ENCODE measurements at regions of chr2 and their contacts with region 1.

Region 1: DNA sequence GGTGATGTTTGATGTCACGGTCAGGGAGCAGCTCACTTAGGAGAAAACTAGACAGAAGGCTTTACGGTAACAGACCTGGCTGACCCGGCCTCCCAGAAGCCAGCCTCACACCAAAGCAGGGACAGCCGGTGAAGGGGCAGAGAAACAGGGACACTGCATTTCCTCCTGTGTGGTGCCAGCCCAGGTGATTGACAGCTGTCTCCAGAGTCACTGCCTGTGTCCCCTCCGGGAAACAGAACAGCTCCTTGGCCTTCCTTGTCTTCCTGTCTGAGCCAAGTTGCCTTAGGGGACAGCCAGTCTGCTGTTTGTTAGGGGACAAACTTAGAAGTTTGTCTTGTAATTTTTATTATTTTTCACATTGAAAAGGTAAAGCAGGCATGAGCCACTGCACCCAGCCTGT is 41.2 kb downstream of the PLB1 start:
- DNase-seq: no peak
- H3K4me3 ChIP-seq: no peak overlapping the region
- H3K4me3 Mint-ChIP-seq: no peak overlapping the region
- H3K27ac Mint-ChIP-seq: no peak overlapping the region
- H3K4me1 ChIP-seq: no peaks in the 10 kb centered on the region; the same call in 1 of the 2 replicates
- H3K4me1 Mint-ChIP-seq: no peaks in the 10 kb centered on the region
- H3K27me3 ChIP-seq: no peaks in the 10 kb centered on the region
- H3K27me3 Mint-ChIP-seq: no peaks in the 10 kb centered on the region
- CTCF ChIP-seq: no peak

Region 2: GRCh38 chr2:27683390-27684071 is 853.5 kb before region 1 on chr2:
- CTCF ChIA-PET with region 1: no interaction called
- POLR2A ChIA-PET with region 1: interaction called, 10 read pairs
- intact Hi-C with region 1: no loop called
- DNase-seq: peak; percentile 82 to 93
- H3K4me3 ChIP-seq: no peak overlapping the region
- H3K4me3 Mint-ChIP-seq: no peak overlapping the region
- H3K27ac Mint-ChIP-seq: peak overlapping the region; percentile 81
- H3K4me1 ChIP-seq: peaks cover 28% of the 10 kb centered on the region
- H3K4me1 Mint-ChIP-seq: peaks cover 14% of the 10 kb centered on the region
- H3K27me3 ChIP-seq: no peaks in the 10 kb centered on the region
- H3K27me3 Mint-ChIP-seq: no peaks in the 10 kb centered on the region
- CTCF ChIP-seq: peak; percentile 99 to 100

Region 3: GRCh38 chr2:28870146-28870891 is 333.3 kb after region 1 on chr2 and contains the start of gene TRMT61B:
- CTCF ChIA-PET with region 1: no interaction called
- POLR2A ChIA-PET with region 1: no interaction called
- intact Hi-C with region 1: no loop called
- DNase-seq: peak; percentile 97 to 98
- H3K4me3 ChIP-seq: peak within 1 kb of the TSS; percentile 78
- H3K4me3 Mint-ChIP-seq: peak within 1 kb of the TSS; percentile 90
- H3K27ac Mint-ChIP-seq: peak within 1 kb of the TSS; percentile 93
- H3K4me1 ChIP-seq: 0 out of 2 replicates have a peak, but pooled peaks cover 7% of the 10 kb centered on the region
- H3K4me1 Mint-ChIP-seq: peaks cover 7% of the 10 kb centered on the region
- H3K27me3 ChIP-seq: no peaks in the 10 kb centered on the region
- H3K27me3 Mint-ChIP-seq: peaks cover under 1% of the 10 kb centered on the region
- CTCF ChIP-seq: no peak
- total RNA-seq, gene TRMT61B: 19.9 and 20.0 TPM in 2 replicates

Measured in Caco-2 (cell line).